ENCODE measurements at regions of chr9 and their contacts with region 1.

Region 1: DNA sequence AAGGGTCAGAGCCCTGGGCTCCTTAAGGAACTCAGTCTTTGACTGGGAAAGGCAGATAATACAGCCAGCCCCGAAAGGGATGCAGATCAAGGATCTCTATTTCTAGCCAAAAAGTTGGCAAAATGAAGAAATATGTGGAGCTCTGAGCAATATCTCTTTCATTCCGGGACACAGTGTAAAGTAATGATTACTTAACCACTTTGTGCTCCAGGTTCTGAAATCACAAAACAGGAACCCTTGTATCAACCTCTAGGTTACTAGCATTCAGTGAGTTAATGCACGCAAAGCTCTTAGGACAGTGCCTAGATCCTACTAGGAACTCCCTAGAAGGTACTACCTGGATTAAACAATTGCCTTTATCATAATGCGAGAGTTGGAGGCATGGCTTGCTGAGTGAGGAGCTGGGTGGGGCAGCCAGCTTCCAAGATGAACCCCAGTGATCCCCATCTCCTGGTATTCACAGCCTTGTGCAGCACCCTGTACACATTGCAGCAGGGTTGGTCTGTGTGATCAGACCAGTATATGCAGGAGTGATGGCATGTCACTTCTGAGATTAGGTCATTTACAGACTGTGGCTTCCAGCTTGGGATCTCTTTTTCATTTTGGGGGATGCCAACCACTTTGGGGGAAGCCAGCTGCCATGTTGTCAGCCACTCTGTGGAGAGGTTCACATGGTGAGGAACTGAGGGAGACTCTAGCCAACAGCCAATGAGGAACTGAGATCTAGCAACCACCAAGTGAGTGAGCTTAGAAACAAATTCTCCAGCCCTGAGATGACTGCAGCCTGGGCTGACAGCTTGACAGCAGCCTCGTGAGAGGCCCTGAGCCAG is 103.1 kb upstream of the SLC44A1 start:
- DNase-seq: no peak
- H3K4me3 ChIP-seq: no peak overlapping the region
- H3K27ac ChIP-seq: no peak overlapping the region
- H3K4me1 ChIP-seq: peaks cover 4% of the 10 kb centered on the region
- H3K27me3 ChIP-seq: no peaks in the 10 kb centered on the region
- CTCF ChIP-seq: no peak
- EP300 ChIP-seq: no peak
- POLR2A ChIP-seq: no peak

Region 2: DNA sequence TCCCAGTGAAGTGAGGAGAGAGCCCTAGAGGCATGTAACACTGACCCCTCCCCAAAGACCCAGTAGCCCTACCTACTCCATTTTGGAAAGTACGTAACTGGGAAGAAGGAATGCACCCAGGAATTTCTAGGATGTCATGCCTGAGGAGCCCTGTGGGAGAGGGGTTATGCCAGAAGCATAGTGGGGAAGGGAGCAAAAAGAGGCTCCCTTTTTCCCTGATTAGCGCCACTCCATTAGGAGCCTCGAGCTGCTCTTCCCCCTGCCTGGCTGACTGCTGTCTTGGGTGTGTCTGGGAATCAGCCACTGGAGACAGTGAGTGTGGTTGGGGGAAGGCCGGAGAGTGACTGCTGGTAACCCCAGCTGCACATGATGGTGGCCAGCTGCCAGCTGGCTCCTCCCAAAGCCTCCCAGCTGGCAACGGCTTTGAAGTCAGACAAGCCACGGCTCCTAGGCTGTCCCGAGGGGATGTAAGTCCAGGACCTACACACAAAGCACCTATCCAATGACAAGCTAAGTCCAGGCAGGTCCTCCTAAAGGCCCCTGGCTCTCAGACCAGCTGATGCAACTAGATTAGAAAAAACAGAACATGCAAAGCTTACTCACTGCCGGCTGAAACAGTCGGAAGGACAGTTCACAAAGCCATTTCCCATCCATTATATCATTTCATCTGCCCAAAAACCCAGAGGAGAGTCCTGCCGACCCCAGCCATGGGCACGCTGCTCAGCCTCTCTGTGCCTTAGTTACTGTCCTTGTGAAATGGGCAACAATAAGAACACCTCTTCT is 76.9 kb before region 1 on chr9:
- intact Hi-C with region 1: loop called in 1 of 4 experiments (anchors 10 kb)
- DNase-seq: peak; percentile 87 to 92 (median 89)
- H3K4me3 ChIP-seq: no peak overlapping the region
- H3K27ac ChIP-seq: peak overlapping the region; percentile 61 to 78
- H3K4me1 ChIP-seq: peaks cover 14% of the 10 kb centered on the region
- H3K27me3 ChIP-seq: no peaks in the 10 kb centered on the region
- CTCF ChIP-seq: no peak
- EP300 ChIP-seq: no peak
- POLR2A ChIP-seq: no peak

Measured in ovary (tissue), 10 donors.